Activated naive CD4-positive, alpha-beta T cell treated with anti-CD3 and anti-CD28 coated beads for 36 hours (primary cell): ENCODE measurements at regions of chr2 and their contacts with region 1.

Region 1: GRCh38 chr2:135004005-135004746 is 43.1 kb downstream of the MAP3K19 start:
- DNase-seq: peak; percentile 79
- H3K4me3 Mint-ChIP-seq: no peak overlapping the region
- H3K27ac Mint-ChIP-seq: no peak overlapping the region
- H3K4me1 Mint-ChIP-seq: peaks cover 5% of the 10 kb centered on the region
- H3K27me3 Mint-ChIP-seq: peaks cover 12% of the 10 kb centered on the region

Region 2: DNA sequence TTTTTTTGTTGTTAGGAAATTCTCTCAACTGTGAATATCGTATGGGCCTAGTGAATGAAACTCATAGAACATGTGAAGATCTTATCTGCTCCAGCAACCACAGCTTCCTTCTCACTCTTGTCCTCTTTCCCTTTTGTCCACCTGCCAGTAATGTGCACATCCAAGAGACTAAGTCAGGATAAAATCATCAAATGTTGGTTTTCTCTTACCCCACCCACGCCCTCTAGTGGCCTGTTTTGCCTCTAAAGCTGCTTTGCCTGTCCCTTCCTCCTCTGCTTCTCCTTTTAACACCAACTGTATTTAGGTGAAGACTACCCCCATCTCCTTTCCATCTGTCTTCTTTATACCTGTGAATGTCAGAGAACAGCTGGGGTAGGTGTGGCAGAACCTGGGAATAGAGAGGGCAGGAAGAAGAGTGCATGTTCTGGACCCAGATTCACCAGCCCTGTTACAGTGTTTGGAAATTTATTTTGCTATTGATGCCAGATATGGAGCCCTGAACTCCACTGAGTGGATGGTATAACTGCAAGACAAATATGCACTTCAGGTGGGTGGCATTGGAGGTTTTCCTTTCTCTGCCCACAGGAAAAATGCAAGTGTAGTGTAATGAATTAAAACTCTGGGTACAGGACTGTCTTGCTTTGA is 758.7 kb before region 1 on chr2:
- CTCF ChIA-PET with region 1: no interaction called
- intact Hi-C with region 1: no loop called
- DNase-seq: peak; percentile 90
- H3K4me3 Mint-ChIP-seq: no peak overlapping the region
- H3K27ac Mint-ChIP-seq: no peak overlapping the region
- H3K4me1 Mint-ChIP-seq: peaks cover 68% of the 10 kb centered on the region
- H3K27me3 Mint-ChIP-seq: no peaks in the 10 kb centered on the region

Region 3: GRCh38 chr2:134973241-134974138 is 30.7 kb before region 1 on chr2:
- CTCF ChIA-PET with region 1: no interaction called
- intact Hi-C with region 1: no loop called
- DNase-seq: no peak
- H3K4me3 Mint-ChIP-seq: no peak overlapping the region
- H3K27ac Mint-ChIP-seq: peak overlapping the region; percentile 6
- H3K4me1 Mint-ChIP-seq: peaks cover 15% of the 10 kb centered on the region
- H3K27me3 Mint-ChIP-seq: peaks cover 3% of the 10 kb centered on the region

Region 4: GRCh38 chr2:134988994-134989605 is 15.1 kb before region 1 on chr2:
- CTCF ChIA-PET with region 1: interaction called, 12 read pairs
- intact Hi-C with region 1: no loop called
- DNase-seq: no peak
- H3K4me3 Mint-ChIP-seq: no peak overlapping the region
- H3K27ac Mint-ChIP-seq: no peak overlapping the region
- H3K4me1 Mint-ChIP-seq: no peaks in the 10 kb centered on the region
- H3K27me3 Mint-ChIP-seq: no peaks in the 10 kb centered on the region

Region 5: GRCh38 chr2:135168204-135168856 is 164.2 kb after region 1 on chr2:
- CTCF ChIA-PET with region 1: interaction called, 8 read pairs
- intact Hi-C with region 1: loop called (anchors 5 kb)
- DNase-seq: no peak
- H3K4me3 Mint-ChIP-seq: no peak overlapping the region
- H3K27ac Mint-ChIP-seq: no peak overlapping the region
- H3K4me1 Mint-ChIP-seq: peaks cover 1% of the 10 kb centered on the region
- H3K27me3 Mint-ChIP-seq: no peaks in the 10 kb centered on the region

Region 6: GRCh38 chr2:135473567-135473966 is 469.4 kb after region 1 on chr2:
- CTCF ChIA-PET with region 1: interaction called, 5 read pairs
- intact Hi-C with region 1: loop called (anchors 5 kb)
- DNase-seq: peak; percentile 40
- H3K4me3 Mint-ChIP-seq: no peak overlapping the region
- H3K27ac Mint-ChIP-seq: no peak overlapping the region
- H3K4me1 Mint-ChIP-seq: peaks cover 2% of the 10 kb centered on the region
- H3K27me3 Mint-ChIP-seq: no peaks in the 10 kb centered on the region

Region 7: GRCh38 chr2:135709992-135710391 is 705.8 kb after region 1 on chr2:
- CTCF ChIA-PET with region 1: interaction called, 36 read pairs
- intact Hi-C with region 1: loop called (anchors 1 kb)
- DNase-seq: peak; percentile 82
- H3K4me3 Mint-ChIP-seq: no peak overlapping the region
- H3K27ac Mint-ChIP-seq: no peak overlapping the region
- H3K4me1 Mint-ChIP-seq: no peaks in the 10 kb centered on the region
- H3K27me3 Mint-ChIP-seq: no peaks in the 10 kb centered on the region